ENCODE measurements at regions of chr6 and their contacts with region 1.

Region 1: GRCh38 chr6:169121013-169121412 is 132.6 kb downstream of the THBS2 start:
- DNase-seq: no peak
- ATAC-seq: no peak
- H3K4me3 ChIP-seq: no peak overlapping the region
- H3K27ac ChIP-seq: no peak overlapping the region
- H3K4me1 ChIP-seq: no peaks in the 10 kb centered on the region
- H3K27me3 ChIP-seq: no peaks in the 10 kb centered on the region

Region 2: GRCh38 chr6:169087443-169088041 is 33.5 kb before region 1 on chr6:
- intact Hi-C with region 1: loop called in 1 of 2 experiments (anchors 5 kb)
- DNase-seq: no peak
- ATAC-seq: no peak
- H3K4me3 ChIP-seq: no peak overlapping the region
- H3K27ac ChIP-seq: no peak overlapping the region
- H3K4me1 ChIP-seq: no peaks in the 10 kb centered on the region
- H3K27me3 ChIP-seq: no peaks in the 10 kb centered on the region